ENCODE measurements at regions of chr5 and their contacts with region 1.

Region 1: GRCh38 chr5:159331093-159331973 is 1.0 kb upstream of the IL12B start:
- DNase-seq: peak; percentile 43 to 79 (median 65)
- ATAC-seq: peak; percentile 93
- H3K4me3 ChIP-seq: peak overlapping the region; percentile 46
- H3K4me3 Mint-ChIP-seq: peak overlapping the region; percentile 66 to 80 (median 74)
- H3K27ac ChIP-seq: peak overlapping the region; percentile 22
- H3K27ac Mint-ChIP-seq: peak overlapping the region in 6 of 9 donors; percentile 9 to 75 (median 64)
- H3K4me1 ChIP-seq: peaks cover 0 to 4% of the 10 kb centered on the region in 2 donors
- H3K4me1 Mint-ChIP-seq: peaks cover 3 to 52% (median 23%) of the 10 kb centered on the region in 7 donors
- H3K27me3 ChIP-seq: no peaks in the 10 kb centered on the region
- H3K27me3 Mint-ChIP-seq: peaks cover 0 to 35% (median 0%) of the 10 kb centered on the region in 5 donors

Region 2: GRCh38 chr5:159310511-159310910 is 20.8 kb before region 1 on chr5:
- CTCF ChIA-PET with region 1: no interaction called
- POLR2A ChIA-PET with region 1: no interaction called
- intact Hi-C with region 1: no loop called
- DNase-seq: peak in 7 of 9 donors; percentile 2 to 45 (median 41)
- ATAC-seq: peak; percentile 90
- H3K4me3 ChIP-seq: peak overlapping the region; percentile 32
- H3K4me3 Mint-ChIP-seq: peak overlapping the region; percentile 18 to 81 (median 68)
- H3K27ac ChIP-seq: no peak overlapping the region
- H3K27ac Mint-ChIP-seq: peak overlapping the region in 4 of 9 donors; percentile 60 to 86 (median 70)
- H3K4me1 ChIP-seq: peaks cover 3 to 8% of the 10 kb centered on the region in 2 donors
- H3K4me1 Mint-ChIP-seq: peaks cover 3 to 17% (median 11%) of the 10 kb centered on the region in 7 donors
- H3K27me3 ChIP-seq: no peaks in the 10 kb centered on the region
- H3K27me3 Mint-ChIP-seq: peaks cover 0 to 79% (median 10%) of the 10 kb centered on the region in 5 donors

Region 3: DNA sequence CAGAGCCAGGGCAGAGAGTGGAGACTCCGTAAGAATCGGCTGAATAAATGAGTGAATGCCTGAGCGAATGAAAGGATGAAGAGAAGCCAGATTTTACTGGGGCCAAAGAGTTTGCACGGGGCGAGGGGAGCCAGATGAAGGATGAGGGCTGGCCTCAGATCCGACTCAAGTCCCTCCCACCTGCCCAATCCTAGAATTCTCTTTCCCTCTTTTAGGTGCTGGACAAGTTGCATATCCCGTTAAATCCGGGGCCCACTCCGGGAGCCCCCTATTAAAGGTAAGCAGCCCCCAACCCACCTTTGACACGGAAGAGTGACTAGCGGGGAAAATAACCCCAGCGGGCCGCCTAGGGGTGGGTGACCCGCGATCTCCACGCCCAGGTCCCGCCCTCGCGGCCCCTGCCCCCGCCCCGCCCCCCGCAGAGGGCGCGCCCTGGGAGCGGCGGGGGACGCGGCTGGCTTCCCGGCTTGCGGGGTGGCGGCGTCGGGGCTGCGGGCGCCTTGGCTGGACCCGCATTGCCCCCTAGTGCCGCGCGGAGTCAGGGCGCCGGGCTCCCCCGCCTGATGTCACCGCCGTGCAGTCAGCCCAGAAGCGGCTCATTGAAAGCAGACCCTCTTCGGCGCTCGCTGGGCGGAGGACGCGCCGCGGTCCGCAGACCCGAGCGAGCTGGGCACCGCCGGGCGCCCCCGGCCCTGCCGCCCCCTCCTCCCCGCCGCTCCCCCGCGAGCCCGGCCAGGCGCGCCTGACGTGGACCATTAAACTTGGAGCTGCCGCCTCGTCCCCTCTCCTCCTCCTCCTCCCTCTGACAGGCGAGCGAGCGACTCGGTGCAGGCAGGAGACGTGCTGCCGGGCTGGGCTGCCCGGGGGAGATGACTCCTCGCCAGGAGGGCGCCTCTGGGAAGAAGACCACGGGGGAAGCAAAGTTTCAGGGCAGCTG is 584.8 kb after region 1 on chr5 and contains the start of gene ADRA1B:
- CTCF ChIA-PET with region 1: no interaction called
- POLR2A ChIA-PET with region 1: no interaction called
- intact Hi-C with region 1: loop called in 1 of 2 experiments (anchors 1 kb)
- DNase-seq: peak in 8 of 9 donors; percentile 16 to 47 (median 22)
- ATAC-seq: peak; percentile 77
- H3K4me3 ChIP-seq: no peak within 1 kb of the TSS
- H3K4me3 Mint-ChIP-seq: peak within 1 kb of the TSS; percentile 56 to 78 (median 71)
- H3K27ac ChIP-seq: no peak within 1 kb of the TSS
- H3K27ac Mint-ChIP-seq: no peak within 1 kb of the TSS
- H3K4me1 ChIP-seq: no peaks in the 10 kb centered on the region
- H3K4me1 Mint-ChIP-seq: peaks cover 4 to 15% (median 9%) of the 10 kb centered on the region in 7 donors
- H3K27me3 ChIP-seq: peaks cover 3 to 8% of the 10 kb centered on the region in 2 donors
- H3K27me3 Mint-ChIP-seq: peaks cover 59 to 67% (median 62%) of the 10 kb centered on the region in 5 donors
- total RNA-seq, gene ADRA1B: 0.10 TPM in 1 of 5 experiments, not detected in the others

Region 4: DNA sequence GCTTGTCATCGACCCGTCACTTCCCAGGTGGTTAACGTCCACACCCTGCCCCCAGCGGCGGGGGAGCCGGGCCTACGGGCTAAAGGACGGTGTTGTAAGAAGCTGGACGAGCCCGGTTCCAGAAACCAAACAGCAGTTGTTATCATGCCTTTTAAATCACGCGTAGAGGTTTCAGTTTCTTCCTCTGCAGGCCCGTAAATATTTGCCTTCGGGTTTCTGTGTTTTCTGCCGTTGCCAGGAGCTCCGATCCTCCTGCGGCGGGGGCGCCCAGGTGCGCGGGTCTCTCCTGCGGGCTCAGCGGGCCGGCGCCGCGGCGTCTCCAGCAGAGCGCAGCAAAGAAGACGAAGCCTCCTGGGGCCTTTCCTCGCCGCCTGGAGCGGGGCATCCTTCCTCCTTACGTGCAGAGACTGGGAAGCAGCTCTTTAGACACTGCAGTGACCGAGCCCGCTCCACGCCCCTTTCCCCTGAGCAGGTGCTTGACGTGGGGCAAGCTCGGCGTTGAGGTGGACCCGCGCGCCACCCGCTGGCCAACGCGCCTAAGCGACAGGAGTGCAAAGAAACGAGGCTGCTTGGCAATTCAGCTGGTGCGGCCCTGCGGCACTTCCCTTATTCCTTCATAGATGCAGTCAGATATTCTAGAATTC is 655.8 kb after region 1 on chr5:
- CTCF ChIA-PET with region 1: interaction called, 5 read pairs
- POLR2A ChIA-PET with region 1: no interaction called
- intact Hi-C with region 1: loop called (anchors 1 kb)
- DNase-seq: peak; percentile 56 to 73 (median 69)
- ATAC-seq: peak; percentile 92
- H3K4me3 ChIP-seq: peak overlapping the region; percentile 58
- H3K4me3 Mint-ChIP-seq: peak overlapping the region; percentile 55 to 78 (median 66)
- H3K27ac ChIP-seq: no peak overlapping the region
- H3K27ac Mint-ChIP-seq: peak overlapping the region in 3 of 9 donors; percentile 70 to 83 (median 70)
- H3K4me1 ChIP-seq: peaks cover 0 to 6% of the 10 kb centered on the region in 2 donors
- H3K4me1 Mint-ChIP-seq: peaks cover 0 to 3% (median 0%) of the 10 kb centered on the region in 7 donors
- H3K27me3 ChIP-seq: peaks cover 0 to 5% of the 10 kb centered on the region in 2 donors
- H3K27me3 Mint-ChIP-seq: peaks cover 24 to 70% (median 34%) of the 10 kb centered on the region in 5 donors

Measured in naive thymus-derived CD4-positive, alpha-beta T cell (primary cell).